ENCODE measurements at regions of chr16 and their contacts with region 1.

Region 1: DNA sequence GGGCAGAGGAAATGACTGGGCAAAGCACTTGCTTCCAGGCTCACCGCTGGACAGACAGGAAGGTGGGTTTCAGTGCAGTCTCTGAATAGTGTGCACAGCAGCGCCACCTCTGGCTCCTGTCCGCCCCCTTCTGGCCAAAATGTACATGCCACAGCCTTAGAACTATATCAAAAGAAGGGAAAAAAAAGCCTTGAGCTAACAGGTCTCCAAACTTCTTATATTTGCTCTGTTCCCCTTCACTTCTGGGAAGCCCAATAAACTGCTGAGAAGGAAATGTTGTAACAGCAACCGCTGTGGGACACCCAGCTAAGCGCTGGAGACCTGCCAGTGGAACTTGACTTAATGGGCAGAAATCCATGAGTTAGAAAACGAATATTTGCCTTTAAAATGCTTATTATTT is 17.5 kb downstream of the COG7 start:
- H3K4me3 ChIP-seq: no peak overlapping the region
- H3K27ac ChIP-seq: no peak overlapping the region
- H3K4me1 ChIP-seq: no peaks in the 10 kb centered on the region
- CTCF ChIP-seq: peak; percentile 83

Region 2: DNA sequence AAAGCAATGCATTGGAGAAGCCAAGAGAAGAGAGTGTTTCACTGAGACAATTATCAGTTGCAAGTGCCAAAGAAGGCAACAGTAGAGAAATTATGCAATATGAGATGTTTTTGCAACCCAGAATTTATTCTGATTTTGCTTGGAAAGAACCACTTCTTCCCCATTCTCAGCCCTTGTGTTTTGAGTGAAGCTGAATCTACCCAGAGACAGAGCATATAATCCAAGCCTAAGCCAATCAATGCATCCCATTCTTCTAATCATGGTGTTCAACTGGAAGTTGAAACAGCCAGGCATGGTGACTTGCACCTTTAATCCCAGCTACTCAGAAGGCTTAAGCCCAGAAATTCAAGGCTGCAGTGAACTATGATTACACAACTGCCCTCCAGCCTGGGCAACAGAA is 259.8 kb before region 1 on chr16:
- CTCF ChIA-PET with region 1: interaction called, 174 read pairs
- POLR2A ChIA-PET with region 1: no interaction called
- H3K4me3 ChIP-seq: no peak overlapping the region
- H3K27ac ChIP-seq: no peak overlapping the region
- H3K4me1 ChIP-seq: no peaks in the 10 kb centered on the region
- CTCF ChIP-seq: no peak

Region 3: GRCh38 chr16:23217646-23218045 is 217.9 kb before region 1 on chr16:
- CTCF ChIA-PET with region 1: interaction called, 10 read pairs
- POLR2A ChIA-PET with region 1: no interaction called
- H3K4me3 ChIP-seq: no peak overlapping the region
- H3K27ac ChIP-seq: no peak overlapping the region
- H3K4me1 ChIP-seq: no peaks in the 10 kb centered on the region
- CTCF ChIP-seq: no peak

Region 4: GRCh38 chr16:23310217-23310616 is 125.3 kb before region 1 on chr16:
- CTCF ChIA-PET with region 1: interaction called, 11 read pairs
- POLR2A ChIA-PET with region 1: no interaction called
- H3K4me3 ChIP-seq: no peak overlapping the region
- H3K27ac ChIP-seq: no peak overlapping the region
- H3K4me1 ChIP-seq: no peaks in the 10 kb centered on the region; the same call in 1 of the 2 replicates
- CTCF ChIP-seq: no peak

Region 5: DNA sequence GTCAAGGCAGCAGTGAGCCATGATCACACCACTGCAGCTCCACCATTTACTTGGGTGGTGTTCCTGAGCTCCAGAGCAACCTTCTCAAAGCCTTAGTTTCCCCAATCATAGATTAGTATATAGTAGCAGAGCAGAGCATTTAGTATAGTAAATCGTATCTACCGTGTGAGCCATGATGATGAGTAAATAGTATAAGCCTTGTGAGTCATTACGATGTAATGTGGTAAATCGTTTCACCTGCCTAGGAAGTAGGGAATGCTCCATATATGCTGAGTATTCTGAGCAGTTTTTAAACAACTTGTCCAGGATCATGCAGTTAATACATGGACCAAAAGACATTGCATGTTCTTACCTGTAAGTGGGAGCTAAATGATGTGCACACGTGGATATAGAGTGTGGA is 67.0 kb before region 1 on chr16:
- CTCF ChIA-PET with region 1: no interaction called
- POLR2A ChIA-PET with region 1: no interaction called
- H3K4me3 ChIP-seq: no peak overlapping the region
- H3K27ac ChIP-seq: no peak overlapping the region
- H3K4me1 ChIP-seq: no peaks in the 10 kb centered on the region
- CTCF ChIP-seq: no peak

Region 6: GRCh38 chr16:23423496-23424049 is 11.9 kb before region 1 on chr16:
- CTCF ChIA-PET with region 1: interaction called, 48 read pairs
- POLR2A ChIA-PET with region 1: no interaction called
- H3K4me3 ChIP-seq: no peak overlapping the region
- H3K27ac ChIP-seq: peak overlapping the region; percentile 49; the same call in 1 of the 2 replicates
- H3K4me1 ChIP-seq: peaks cover 3% of the 10 kb centered on the region; the same call in 1 of the 2 replicates
- CTCF ChIP-seq: no peak

Region 7: GRCh38 chr16:23469814-23470213 is 34.3 kb after region 1 on chr16:
- CTCF ChIA-PET with region 1: no interaction called
- POLR2A ChIA-PET with region 1: no interaction called
- H3K4me3 ChIP-seq: no peak overlapping the region
- H3K27ac ChIP-seq: no peak overlapping the region
- H3K4me1 ChIP-seq: no peaks in the 10 kb centered on the region
- CTCF ChIP-seq: no peak